ENCODE measurements at regions of chr10 and their contacts with region 1.

Region 1: GRCh38 chr10:86127274-86127819 is 239.2 kb downstream of the GRID1 start:
- DNase-seq: no peak
- H3K4me3 ChIP-seq: no peak overlapping the region
- H3K27ac ChIP-seq: no peak overlapping the region
- H3K4me1 ChIP-seq: no peaks in the 10 kb centered on the region; a peak in 1 of 7 replicates
- H3K27me3 ChIP-seq: no peaks in the 10 kb centered on the region
- CTCF ChIP-seq: no peak
- EP300 ChIP-seq: no peak
- POLR2A ChIP-seq: no peak
- RAD21 ChIP-seq: no peak

Region 2: DNA sequence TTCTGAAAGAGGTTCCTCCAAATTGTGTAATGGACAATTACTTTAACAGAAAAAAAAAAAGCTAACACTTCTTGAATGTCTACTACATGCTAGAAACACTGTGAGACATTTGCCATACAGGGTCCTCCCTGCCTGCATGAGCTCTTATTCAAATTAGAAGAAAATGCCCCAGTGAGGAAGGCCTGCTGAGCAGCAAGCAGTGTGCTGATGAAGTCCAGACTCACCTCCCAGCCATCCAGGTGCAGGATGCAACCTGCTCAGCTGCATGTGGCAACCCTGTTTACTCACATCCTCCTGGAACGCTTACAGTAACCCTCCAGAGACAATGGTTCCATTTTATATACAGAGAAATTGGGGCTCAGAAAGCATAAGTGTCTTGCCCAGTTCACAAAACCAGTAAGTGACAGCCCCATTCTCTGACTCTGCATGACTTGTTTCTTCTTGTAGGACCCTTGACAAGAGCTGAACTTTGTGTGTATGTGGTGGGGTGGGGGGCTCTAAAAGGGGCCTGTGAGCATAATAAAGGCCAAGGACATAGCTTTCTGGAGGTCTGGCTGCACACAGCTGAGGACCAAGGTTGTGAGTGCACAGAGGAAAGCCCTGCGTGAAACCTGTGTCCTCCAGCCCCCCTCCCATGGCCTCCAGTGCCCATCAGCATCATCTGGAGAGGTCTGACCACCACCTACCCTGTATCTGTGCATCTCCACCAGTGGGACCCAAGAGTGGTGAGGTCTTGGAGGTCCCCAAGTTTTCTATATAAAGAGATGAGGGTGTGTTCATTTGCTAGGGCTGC is 148.6 kb before region 1 on chr10:
- CTCF ChIA-PET with region 1: no interaction called
- POLR2A ChIA-PET with region 1: no interaction called
- DNase-seq: no peak
- H3K4me3 ChIP-seq: no peak overlapping the region
- H3K27ac ChIP-seq: no peak overlapping the region
- H3K4me1 ChIP-seq: peaks cover 0 to 4% (median 0%) of the 10 kb centered on the region in 4 experiments; a peak in 1 of 7 replicates
- H3K27me3 ChIP-seq: no peaks in the 10 kb centered on the region
- CTCF ChIP-seq: no peak
- EP300 ChIP-seq: no peak
- POLR2A ChIP-seq: no peak
- RAD21 ChIP-seq: no peak

Region 3: GRCh38 chr10:86100581-86101061 is 26.7 kb before region 1 on chr10:
- CTCF ChIA-PET with region 1: interaction called, 11 read pairs
- POLR2A ChIA-PET with region 1: no interaction called
- DNase-seq: no peak
- H3K4me3 ChIP-seq: no peak overlapping the region
- H3K27ac ChIP-seq: no peak overlapping the region
- H3K4me1 ChIP-seq: no peaks in the 10 kb centered on the region
- H3K27me3 ChIP-seq: no peaks in the 10 kb centered on the region
- CTCF ChIP-seq: peak; percentile 17 to 83 (median 69)
- EP300 ChIP-seq: no peak
- POLR2A ChIP-seq: no peak
- RAD21 ChIP-seq: peak; percentile 51 to 69

Region 4: GRCh38 chr10:86110156-86110786 is 17.1 kb before region 1 on chr10:
- CTCF ChIA-PET with region 1: interaction called, 12 read pairs
- POLR2A ChIA-PET with region 1: no interaction called
- DNase-seq: peak in 1 of 2 experiments; percentile 69
- H3K4me3 ChIP-seq: no peak overlapping the region
- H3K27ac ChIP-seq: no peak overlapping the region
- H3K4me1 ChIP-seq: no peaks in the 10 kb centered on the region
- H3K27me3 ChIP-seq: no peaks in the 10 kb centered on the region
- CTCF ChIP-seq: peak; percentile 66 to 88 (median 85)
- EP300 ChIP-seq: no peak
- POLR2A ChIP-seq: no peak
- RAD21 ChIP-seq: peak; percentile 56 to 68

Region 5: GRCh38 chr10:86139066-86139657 is 11.8 kb after region 1 on chr10:
- CTCF ChIA-PET with region 1: interaction called, 16 read pairs
- POLR2A ChIA-PET with region 1: no interaction called
- DNase-seq: peak; percentile 17 to 84
- H3K4me3 ChIP-seq: no peak overlapping the region
- H3K27ac ChIP-seq: no peak overlapping the region
- H3K4me1 ChIP-seq: no peaks in the 10 kb centered on the region
- H3K27me3 ChIP-seq: no peaks in the 10 kb centered on the region
- CTCF ChIP-seq: peak; percentile 85 to 94 (median 92)
- EP300 ChIP-seq: no peak
- POLR2A ChIP-seq: no peak
- RAD21 ChIP-seq: peak; percentile 87 to 88

Region 6: GRCh38 chr10:86217371-86218080 is 90.2 kb after region 1 on chr10:
- CTCF ChIA-PET with region 1: no interaction called
- POLR2A ChIA-PET with region 1: no interaction called
- DNase-seq: no peak
- H3K4me3 ChIP-seq: no peak overlapping the region
- H3K27ac ChIP-seq: no peak overlapping the region
- H3K4me1 ChIP-seq: peaks cover 0 to 3% (median 0%) of the 10 kb centered on the region in 4 experiments; a peak in 1 of 7 replicates
- H3K27me3 ChIP-seq: no peaks in the 10 kb centered on the region
- CTCF ChIP-seq: no peak
- EP300 ChIP-seq: no peak
- POLR2A ChIP-seq: no peak
- RAD21 ChIP-seq: no peak